ENCODE measurements at regions of chr6 and their contacts with region 1.

Region 1: DNA sequence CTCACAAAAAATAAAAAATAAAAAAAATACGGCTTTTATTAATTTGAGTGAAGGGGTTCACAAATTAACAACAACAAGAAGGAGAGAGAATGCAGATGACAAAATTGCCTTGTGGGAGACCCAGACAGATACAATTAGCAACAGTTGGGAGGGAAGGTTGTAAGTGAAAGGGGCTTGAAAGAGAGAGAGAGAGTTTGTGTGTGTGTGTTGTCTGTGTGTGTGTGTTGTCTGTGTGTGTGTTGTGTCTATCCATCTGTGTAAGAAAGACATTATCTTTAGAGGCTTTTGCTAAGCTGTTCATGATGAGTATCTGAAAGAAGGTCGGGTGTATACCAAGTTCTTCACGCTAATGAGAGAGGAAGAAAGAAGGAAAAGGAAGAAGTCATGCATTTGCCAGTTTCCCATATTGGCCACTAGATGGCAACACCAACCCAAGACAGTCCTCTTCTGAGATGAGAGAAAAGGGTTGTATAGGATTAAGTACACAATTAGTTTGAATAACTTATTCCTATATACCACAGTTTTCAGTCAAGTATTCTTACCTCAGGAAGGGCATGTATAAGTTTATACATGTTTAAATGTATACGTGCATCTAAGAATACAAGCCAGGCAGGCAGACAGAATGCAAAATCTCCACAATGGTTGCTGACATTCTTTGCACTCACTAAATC is 63.7 kb upstream of the CD2AP start:
- DNase-seq: peak in 29 of 42 donors; percentile 10 to 77 (median 48)

Region 2: GRCh38 chr6:47357827-47358226 is 56.1 kb before region 1 on chr6:
- intact Hi-C with region 1: no loop called
- DNase-seq: no peak

Region 3: GRCh38 chr6:47787620-47788497 is 374.0 kb after region 1 on chr6:
- intact Hi-C with region 1: loop called (anchors 10 kb)
- DNase-seq: peak; percentile 31 to 83 (median 65)

Measured in head of caudate nucleus (tissue), 42 donors.